AG04449 (cell line): ENCODE measurements at regions of chr2 and their contacts with region 1.

Region 1: DNA sequence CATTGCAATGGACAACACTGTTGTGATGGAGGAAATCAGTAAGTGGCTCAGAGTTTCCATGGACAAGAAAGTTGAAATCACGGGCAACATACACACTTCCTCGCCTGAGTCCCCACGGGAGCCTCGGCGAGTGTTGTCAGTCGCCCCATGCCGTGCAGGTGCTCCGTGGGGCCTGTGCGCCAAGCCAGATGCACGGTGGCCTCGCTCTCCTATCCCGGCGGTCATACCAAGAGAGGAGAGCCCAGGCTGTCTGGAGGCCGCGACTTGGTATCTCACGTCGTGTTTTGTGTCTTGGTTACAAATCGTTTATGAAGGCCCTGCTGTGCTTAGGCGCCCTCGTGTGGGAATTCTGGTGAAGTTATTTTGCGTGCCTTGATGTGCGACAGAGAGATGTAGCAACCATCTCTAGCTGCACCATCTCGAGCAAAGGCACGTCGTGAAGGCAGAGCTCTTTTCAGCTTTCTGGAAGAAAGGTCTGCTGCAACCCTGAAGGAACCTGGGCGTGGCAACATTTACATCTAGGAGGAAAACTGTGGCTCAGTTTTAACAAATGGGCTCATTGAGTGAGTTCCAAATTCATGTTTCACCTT is 21.8 kb downstream of the ATG4B start:
- DNase-seq: no peak
- H3K4me3 ChIP-seq: no peak overlapping the region
- CTCF ChIP-seq: peak; percentile 74

Region 2: GRCh38 chr2:241232736-241233554 is 426.3 kb before region 1 on chr2:
- CTCF ChIA-PET with region 1: no interaction called
- POLR2A ChIA-PET with region 1: no interaction called
- DNase-seq: no peak
- H3K4me3 ChIP-seq: no peak overlapping the region
- CTCF ChIP-seq: no peak

Region 3: DNA sequence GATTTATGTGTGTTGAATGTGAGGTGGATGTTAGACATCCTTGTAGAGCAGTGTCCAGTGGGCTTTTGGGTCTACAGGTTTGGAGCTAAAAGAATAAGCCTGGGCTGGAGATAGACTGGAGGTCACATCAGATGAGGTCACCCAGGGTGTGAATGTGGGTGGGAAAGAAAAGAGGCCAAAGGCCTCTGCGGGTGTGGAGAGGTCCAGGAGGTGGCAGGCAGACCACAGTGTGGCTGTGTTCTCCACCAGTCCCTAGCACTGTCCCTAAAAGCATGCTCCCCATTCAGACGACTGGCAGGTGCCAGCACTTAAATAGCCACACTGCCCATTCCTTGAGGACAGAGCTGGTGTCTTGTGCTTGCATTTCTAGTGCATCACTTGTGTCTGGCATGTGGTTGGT is 17.6 kb before region 1 on chr2:
- CTCF ChIA-PET with region 1: interaction called, 24 read pairs
- POLR2A ChIA-PET with region 1: no interaction called
- DNase-seq: no peak
- H3K4me3 ChIP-seq: no peak overlapping the region
- CTCF ChIP-seq: no peak

Region 4: GRCh38 chr2:241673797-241674725 is 14.8 kb after region 1 on chr2:
- CTCF ChIA-PET with region 1: interaction called, 12 read pairs
- POLR2A ChIA-PET with region 1: no interaction called
- DNase-seq: no peak
- H3K4me3 ChIP-seq: no peak overlapping the region
- CTCF ChIP-seq: no peak

Region 5: DNA sequence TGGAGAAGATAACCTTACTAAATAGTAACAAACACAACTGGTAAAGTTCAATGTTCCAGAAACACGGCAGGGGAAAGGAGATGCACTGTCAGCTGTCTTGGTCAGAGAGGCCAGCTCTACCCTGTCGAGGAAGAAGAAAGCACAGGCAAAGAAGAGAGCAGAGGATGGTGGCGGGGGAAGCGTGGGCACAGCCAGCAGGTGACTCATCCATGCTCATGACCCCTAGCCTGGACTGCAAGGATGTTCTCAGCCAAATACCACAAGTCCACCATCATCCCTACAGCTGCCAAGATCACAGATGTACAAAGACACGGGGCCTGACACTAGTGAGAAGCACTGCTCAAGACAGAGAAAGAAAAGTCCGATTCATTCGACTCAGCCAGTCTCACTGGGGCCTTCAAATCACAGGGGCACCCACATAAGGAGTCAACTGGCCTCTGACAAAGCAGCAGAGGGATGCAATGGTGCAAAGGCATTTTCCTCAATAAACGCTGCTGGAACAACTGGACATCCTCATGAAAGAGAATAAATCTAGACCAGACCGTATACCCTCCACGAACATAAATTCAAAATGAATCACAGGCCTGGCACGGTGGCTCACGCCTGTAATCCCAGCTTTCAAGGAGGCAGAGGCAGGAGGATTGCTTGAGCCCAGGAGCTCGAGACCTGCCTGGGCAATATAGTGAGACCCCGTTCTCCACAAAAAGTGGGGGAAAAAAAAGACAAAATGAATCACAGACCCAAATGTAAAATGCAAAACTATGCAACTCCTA is 21.8 kb after region 1 on chr2:
- CTCF ChIA-PET with region 1: interaction called, 11 read pairs
- POLR2A ChIA-PET with region 1: no interaction called
- DNase-seq: peak; percentile 93
- H3K4me3 ChIP-seq: no peak overlapping the region
- CTCF ChIP-seq: no peak

Region 6: DNA sequence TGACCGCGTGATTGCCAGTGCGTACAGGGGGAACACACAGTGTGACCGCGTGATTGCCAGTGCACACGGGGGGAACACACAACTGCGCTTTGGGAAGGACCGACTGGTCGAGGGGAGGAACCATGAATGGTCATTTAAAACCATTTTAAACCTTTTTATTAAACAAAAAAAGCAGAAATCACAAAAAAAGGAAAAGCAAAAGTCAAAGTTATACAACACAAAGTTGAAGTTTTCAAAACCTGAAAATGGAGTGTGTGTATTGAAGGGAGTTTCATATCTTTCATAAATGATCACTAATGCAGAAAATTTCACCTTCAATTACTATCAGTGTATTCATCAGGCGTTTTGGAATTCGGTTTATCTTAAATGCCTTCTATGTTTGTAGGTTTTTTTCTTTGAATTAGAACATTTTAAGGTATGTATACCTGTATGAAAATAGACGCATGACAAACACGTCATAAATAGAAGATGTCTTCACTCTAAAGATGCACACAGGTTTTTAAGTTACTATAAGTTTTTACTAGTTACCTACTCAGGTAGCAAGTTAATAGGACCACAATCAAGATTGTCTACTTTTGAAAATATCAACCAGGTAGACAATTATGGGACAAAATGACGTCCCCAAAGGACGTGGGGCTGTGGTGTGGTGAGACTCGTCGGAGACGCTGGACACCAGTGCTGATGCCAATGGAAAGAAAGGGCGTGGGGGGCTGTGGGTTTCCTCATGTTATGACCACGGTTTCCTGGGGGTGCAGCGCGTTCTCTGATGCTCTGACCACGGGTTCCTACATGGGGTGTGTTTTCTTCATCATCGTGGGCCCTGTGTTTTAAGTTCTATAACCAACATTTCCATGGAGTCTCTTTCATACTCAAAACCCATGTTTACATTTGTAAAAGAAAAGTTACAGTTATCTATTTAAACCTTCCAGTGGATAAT is 351.6 kb after region 1 on chr2:
- CTCF ChIA-PET with region 1: no interaction called
- POLR2A ChIA-PET with region 1: no interaction called
- DNase-seq: no peak
- H3K4me3 ChIP-seq: no peak overlapping the region
- CTCF ChIP-seq: no peak